ENCODE measurements at regions of chr17 and their contacts with region 1.

Region 1: DNA sequence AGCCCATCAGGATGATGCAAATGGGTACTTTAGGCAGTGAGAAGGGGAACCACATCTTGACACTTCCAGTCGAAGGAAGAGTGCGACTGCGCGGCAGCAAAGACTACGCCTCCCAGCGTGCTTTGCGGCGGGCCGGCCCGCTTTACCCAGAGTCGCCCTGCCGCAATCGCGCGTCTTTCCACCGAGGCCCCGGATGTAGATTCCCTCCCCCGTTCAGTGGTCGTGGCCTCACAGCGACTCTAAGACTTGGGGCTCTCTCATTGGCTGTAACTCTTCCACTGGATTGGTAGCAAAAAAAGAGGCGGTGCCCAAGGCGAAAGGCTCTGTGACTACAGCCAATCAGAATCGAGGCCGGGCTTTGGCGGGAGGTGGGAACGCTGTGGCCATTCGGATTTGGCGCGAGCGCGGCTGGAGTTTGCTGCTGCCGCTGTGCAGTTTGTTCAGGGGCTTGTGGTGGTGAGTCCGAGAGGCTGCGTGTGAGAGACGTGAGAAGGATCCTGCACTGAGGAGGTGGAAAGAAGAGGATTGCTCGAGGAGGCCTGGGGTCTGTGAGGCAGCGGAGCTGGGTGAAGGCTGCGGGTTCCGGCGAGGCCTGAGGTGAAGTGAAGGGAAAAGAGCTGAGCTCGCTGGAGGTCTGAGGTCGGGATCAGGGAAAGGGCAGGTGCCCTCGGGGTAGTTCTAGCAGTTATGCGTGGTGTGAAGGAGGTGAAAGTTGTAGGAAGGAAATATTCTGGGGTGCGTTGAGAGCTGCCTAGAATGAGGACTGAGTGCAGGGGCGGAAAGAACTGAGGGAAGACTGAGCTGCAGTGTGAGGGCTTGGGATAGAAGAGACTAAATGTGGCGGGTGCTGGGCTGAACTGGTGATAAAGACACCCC is at the start of gene CDC6:
- DNase-seq: peak; percentile 100
- H3K4me3 Mint-ChIP-seq: peak within 1 kb of the TSS; percentile 99
- H3K27ac Mint-ChIP-seq: peak within 1 kb of the TSS; percentile 94
- H3K4me1 Mint-ChIP-seq: peaks cover 47% of the 10 kb centered on the region
- H3K27me3 Mint-ChIP-seq: no peaks in the 10 kb centered on the region
- total RNA-seq, gene CDC6: 86.5 to 90.4 TPM

Region 2: GRCh38 chr17:40203131-40203530 is 84.6 kb before region 1 on chr17:
- CTCF ChIA-PET with region 1: interaction called, 41 read pairs
- intact Hi-C with region 1: loop called (anchors 1 kb)
- DNase-seq: no peak
- H3K4me3 Mint-ChIP-seq: no peak overlapping the region
- H3K27ac Mint-ChIP-seq: no peak overlapping the region
- H3K4me1 Mint-ChIP-seq: no peaks in the 10 kb centered on the region
- H3K27me3 Mint-ChIP-seq: no peaks in the 10 kb centered on the region

Measured in activated naive CD4-positive, alpha-beta T cell treated with anti-CD3 and anti-CD28 coated beads for 36 hours (primary cell).